IMR-90 (cell line): ENCODE measurements at regions of chr1 and their contacts with region 1.

Region 1: GRCh38 chr1:98053471-98054366 is 132.9 kb upstream of the DPYD start:
- DNase-seq: peak; percentile 65
- ATAC-seq: peak; percentile 92
- H3K4me3 ChIP-seq: peak overlapping the region; percentile 41
- H3K27ac ChIP-seq: peak overlapping the region; percentile 60
- H3K4me1 ChIP-seq: peaks cover 5% of the 10 kb centered on the region
- H3K27me3 ChIP-seq: no peaks in the 10 kb centered on the region
- CTCF ChIP-seq: peak; percentile 74
- POLR2A ChIP-seq: no peak
- RAD21 ChIP-seq: peak; percentile 70

Region 2: DNA sequence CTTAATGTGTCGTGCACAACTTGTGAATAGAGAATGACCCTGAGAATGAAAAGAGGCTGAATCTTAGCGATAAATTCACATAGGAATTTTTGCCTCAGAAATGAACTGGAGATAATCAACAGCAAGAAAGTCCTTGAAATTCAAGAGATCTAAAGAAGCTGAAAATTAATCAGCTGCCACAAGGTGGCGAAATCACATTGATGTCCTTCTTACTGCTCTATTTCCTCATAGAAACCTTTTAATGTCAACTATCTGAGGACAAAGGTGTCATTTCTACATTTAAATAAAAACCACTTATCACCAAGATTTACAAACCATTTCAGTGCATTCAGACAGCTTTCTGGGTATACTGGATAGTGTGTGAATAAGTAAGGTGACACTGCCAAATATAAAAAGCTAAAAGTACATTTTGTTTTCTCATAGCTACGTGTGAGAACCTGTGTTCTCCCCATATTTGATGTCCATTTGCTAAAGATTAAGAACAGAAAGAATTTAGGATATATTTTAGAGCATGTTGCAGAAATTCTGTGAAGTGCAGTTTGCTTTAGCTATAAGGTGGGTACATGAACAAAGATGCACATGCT is 1817.5 kb before region 1 on chr1:
- CTCF ChIA-PET with region 1: no interaction called
- POLR2A ChIA-PET with region 1: no interaction called
- dilution Hi-C with region 1: no loop called
- in situ Hi-C with region 1: no loop called
- intact Hi-C with region 1: loop called (anchors 5 kb)
- DNase-seq: peak; percentile 75
- ATAC-seq: peak; percentile 75
- H3K4me3 ChIP-seq: no peak overlapping the region
- H3K27ac ChIP-seq: no peak overlapping the region
- H3K4me1 ChIP-seq: no peaks in the 10 kb centered on the region
- H3K27me3 ChIP-seq: no peaks in the 10 kb centered on the region
- CTCF ChIP-seq: peak; percentile 71
- POLR2A ChIP-seq: no peak
- RAD21 ChIP-seq: peak; percentile 83

Region 3: GRCh38 chr1:97192872-97193572 is 860.7 kb before region 1 on chr1:
- CTCF ChIA-PET with region 1: no interaction called
- POLR2A ChIA-PET with region 1: no interaction called
- dilution Hi-C with region 1: no loop called
- in situ Hi-C with region 1: no loop called
- intact Hi-C with region 1: loop called (anchors 5 kb)
- DNase-seq: peak; percentile 99
- ATAC-seq: peak; percentile 95
- H3K4me3 ChIP-seq: no peak overlapping the region
- H3K27ac ChIP-seq: peak overlapping the region; percentile 43; the same call in 1 of the 2 replicates
- H3K4me1 ChIP-seq: peaks cover 2% of the 10 kb centered on the region; the same call in 1 of the 2 replicates
- H3K27me3 ChIP-seq: no peaks in the 10 kb centered on the region
- CTCF ChIP-seq: peak; percentile 44
- POLR2A ChIP-seq: no peak
- RAD21 ChIP-seq: peak; percentile 47

Region 4: DNA sequence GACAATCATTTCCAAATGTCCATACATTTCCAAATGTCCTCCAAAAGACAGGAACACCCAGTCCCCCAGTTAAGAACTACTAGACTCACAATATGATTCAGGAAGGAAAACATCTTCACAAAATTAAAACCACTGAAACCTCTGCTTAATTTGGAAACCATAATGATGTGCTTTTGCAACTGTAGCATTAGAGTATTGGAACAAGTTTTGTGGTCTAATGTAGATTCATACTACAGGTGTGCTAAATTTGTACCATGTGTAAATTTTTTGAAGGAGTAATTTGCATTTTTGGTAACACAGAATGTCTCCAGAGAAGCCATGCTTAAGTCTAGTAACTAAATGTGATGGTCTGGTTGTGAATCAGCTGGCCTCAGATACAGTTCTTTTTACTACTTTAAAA is 262.5 kb before region 1 on chr1:
- CTCF ChIA-PET with region 1: no interaction called
- POLR2A ChIA-PET with region 1: no interaction called
- dilution Hi-C with region 1: no loop called
- in situ Hi-C with region 1: no loop called
- intact Hi-C with region 1: no loop called
- DNase-seq: no peak
- ATAC-seq: no peak
- H3K4me3 ChIP-seq: no peak overlapping the region
- H3K27ac ChIP-seq: no peak overlapping the region
- H3K4me1 ChIP-seq: no peaks in the 10 kb centered on the region
- H3K27me3 ChIP-seq: no peaks in the 10 kb centered on the region
- CTCF ChIP-seq: no peak
- POLR2A ChIP-seq: no peak
- RAD21 ChIP-seq: no peak

Region 5: GRCh38 chr1:97920832-97921571 is 132.7 kb before region 1 on chr1 and contains the start of gene DPYD:
- CTCF ChIA-PET with region 1: no interaction called
- POLR2A ChIA-PET with region 1: no interaction called
- dilution Hi-C with region 1: no loop called
- in situ Hi-C with region 1: loop called (anchors 10 kb)
- intact Hi-C with region 1: loop called (anchors 1 kb)
- DNase-seq: peak; percentile 85
- ATAC-seq: peak; percentile 98
- H3K4me3 ChIP-seq: peak within 1 kb of the TSS; percentile 92
- H3K27ac ChIP-seq: peak within 1 kb of the TSS; percentile 81
- H3K4me1 ChIP-seq: 0 out of 2 replicates have a peak, but pooled peaks cover 2% of the 10 kb centered on the region
- H3K27me3 ChIP-seq: no peaks in the 10 kb centered on the region
- CTCF ChIP-seq: no peak
- POLR2A ChIP-seq: peak; percentile 70; the same call in 1 of the 2 replicates
- RAD21 ChIP-seq: no peak
- total RNA-seq, gene DPYD: 47.3 and 58.3 TPM in 2 replicates

Region 6: GRCh38 chr1:98104289-98104688 is 50.6 kb after region 1 on chr1:
- CTCF ChIA-PET with region 1: no interaction called
- POLR2A ChIA-PET with region 1: no interaction called
- dilution Hi-C with region 1: no loop called
- in situ Hi-C with region 1: no loop called
- intact Hi-C with region 1: loop called (anchors 5 kb)
- DNase-seq: peak; percentile 87
- ATAC-seq: peak; percentile 92
- H3K4me3 ChIP-seq: no peak overlapping the region
- H3K27ac ChIP-seq: no peak overlapping the region
- H3K4me1 ChIP-seq: peaks cover 4% of the 10 kb centered on the region
- H3K27me3 ChIP-seq: no peaks in the 10 kb centered on the region
- CTCF ChIP-seq: no peak
- POLR2A ChIP-seq: no peak
- RAD21 ChIP-seq: no peak

Region 7: GRCh38 chr1:98323906-98324358 is 270.2 kb after region 1 on chr1:
- CTCF ChIA-PET with region 1: interaction called, 3 read pairs
- POLR2A ChIA-PET with region 1: no interaction called
- dilution Hi-C with region 1: no loop called
- in situ Hi-C with region 1: no loop called
- intact Hi-C with region 1: loop called (anchors 5 kb)
- DNase-seq: peak; percentile 96
- ATAC-seq: peak; percentile 73
- H3K4me3 ChIP-seq: no peak overlapping the region
- H3K27ac ChIP-seq: peak overlapping the region; percentile 37
- H3K4me1 ChIP-seq: peaks cover 20% of the 10 kb centered on the region
- H3K27me3 ChIP-seq: no peaks in the 10 kb centered on the region
- CTCF ChIP-seq: no peak
- POLR2A ChIP-seq: no peak
- RAD21 ChIP-seq: no peak